Lower lobe of right lung (tissue), 2 donors: ENCODE measurements at regions of chr18 and their contacts with region 1.

Region 1: DNA sequence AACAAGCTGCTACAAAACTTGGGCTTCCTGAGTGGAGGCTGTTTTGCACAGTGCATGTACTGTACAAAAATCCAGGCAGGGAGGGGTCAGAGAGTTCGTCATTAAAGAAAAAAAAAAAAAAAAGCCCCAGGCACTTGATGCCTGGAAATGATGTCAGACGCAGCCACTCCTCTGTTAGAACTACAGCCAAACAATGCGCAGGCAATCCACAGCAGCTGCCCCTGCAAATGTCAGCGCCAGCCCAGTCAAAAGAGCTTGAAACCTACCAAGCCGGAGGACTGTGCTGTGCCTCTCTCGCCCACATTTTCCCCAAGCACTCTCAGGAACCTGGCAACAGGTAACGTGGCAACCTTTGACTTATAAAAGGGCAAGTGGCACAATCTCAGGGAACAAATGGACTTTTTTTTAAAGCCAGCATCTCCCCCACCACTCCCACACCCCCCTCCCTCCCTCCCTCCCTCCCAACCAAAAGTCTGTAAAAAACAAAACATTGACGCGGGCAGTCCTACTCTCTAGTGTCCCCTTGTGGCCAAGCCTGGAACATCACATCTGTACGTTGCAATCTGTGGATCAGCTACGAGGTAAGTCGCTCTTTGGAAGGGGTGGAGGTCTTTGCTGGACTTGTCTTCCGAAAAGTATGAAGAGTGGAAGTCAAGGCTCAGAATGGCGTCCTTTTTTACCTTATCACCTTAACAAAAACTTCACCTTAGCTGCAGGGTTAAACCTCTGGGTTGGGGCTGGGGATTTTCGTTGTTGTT is 144.1 kb downstream of the TGIF1 start:
- DNase-seq: peak; percentile 80
- ATAC-seq: peak; percentile 86 to 94
- H3K4me3 ChIP-seq: peak overlapping the region; percentile 57
- H3K27ac ChIP-seq: peak overlapping the region; percentile 96
- H3K4me1 ChIP-seq: peaks cover 61% of the 10 kb centered on the region
- H3K27me3 ChIP-seq: no peaks in the 10 kb centered on the region
- CTCF ChIP-seq: peak; percentile 79

Region 2: GRCh38 chr18:3329471-3329870 is 264.6 kb before region 1 on chr18:
- intact Hi-C with region 1: no loop called
- DNase-seq: no peak
- ATAC-seq: no peak
- H3K4me3 ChIP-seq: no peak overlapping the region
- H3K27ac ChIP-seq: no peak overlapping the region
- H3K4me1 ChIP-seq: no peaks in the 10 kb centered on the region
- H3K27me3 ChIP-seq: no peaks in the 10 kb centered on the region
- CTCF ChIP-seq: no peak

Region 3: GRCh38 chr18:3652380-3653262 is 58.5 kb after region 1 on chr18:
- intact Hi-C with region 1: loop called (anchors 10 kb)
- DNase-seq: no peak
- ATAC-seq: peak; percentile 57 to 58
- H3K4me3 ChIP-seq: no peak overlapping the region
- H3K27ac ChIP-seq: no peak overlapping the region
- H3K4me1 ChIP-seq: peaks cover 16% of the 10 kb centered on the region
- H3K27me3 ChIP-seq: no peaks in the 10 kb centered on the region
- CTCF ChIP-seq: no peak